Activated CD4-positive, alpha-beta T cell treated with anti-CD3 and anti-CD28 coated beads, Interleukin-2, amount 10 ng/mL, durations not matched to agents 7 days and 5 days (primary cell): ENCODE measurements at regions of chr3 and their contacts with region 1.

Region 1: GRCh38 chr3:197613199-197613598 is 57.4 kb upstream of the BDH1 start:
- DNase-seq: peak; percentile 46
- H3K4me3 Mint-ChIP-seq: no peak overlapping the region
- H3K27ac Mint-ChIP-seq: peak overlapping the region; percentile 83
- H3K4me1 Mint-ChIP-seq: peaks cover 21% of the 10 kb centered on the region
- H3K27me3 Mint-ChIP-seq: no peaks in the 10 kb centered on the region

Region 2: DNA sequence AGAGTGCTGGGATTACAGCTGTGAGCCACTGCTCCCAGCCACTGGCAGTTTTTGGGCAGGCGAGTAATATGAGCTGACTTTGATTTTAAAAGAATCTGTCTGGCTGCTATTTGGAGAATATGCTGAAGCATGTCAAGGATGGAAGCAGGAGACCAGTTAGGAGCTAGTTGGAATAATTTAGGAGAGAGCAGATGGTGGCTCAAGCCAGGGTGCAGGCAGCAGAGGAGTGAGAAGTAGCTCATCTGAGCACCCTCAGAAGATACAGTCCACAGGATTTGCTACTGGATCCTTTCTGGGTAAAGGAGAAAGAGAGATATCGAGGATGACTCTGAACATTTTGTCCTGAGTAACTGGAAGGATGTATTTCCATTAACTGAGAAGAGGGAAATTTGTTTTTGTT is 27.0 kb before region 1 on chr3:
- CTCF ChIA-PET with region 1: no interaction called
- POLR2A ChIA-PET with region 1: no interaction called
- DNase-seq: no peak
- H3K4me3 Mint-ChIP-seq: no peak overlapping the region
- H3K27ac Mint-ChIP-seq: no peak overlapping the region
- H3K4me1 Mint-ChIP-seq: no peaks in the 10 kb centered on the region
- H3K27me3 Mint-ChIP-seq: peaks cover 4% of the 10 kb centered on the region

Region 3: GRCh38 chr3:197599089-197599765 is 14.0 kb before region 1 on chr3:
- CTCF ChIA-PET with region 1: interaction called, 33 read pairs
- POLR2A ChIA-PET with region 1: interaction called, 3 read pairs
- DNase-seq: peak; percentile 87
- H3K4me3 Mint-ChIP-seq: no peak overlapping the region
- H3K27ac Mint-ChIP-seq: peak overlapping the region; percentile 25
- H3K4me1 Mint-ChIP-seq: no peaks in the 10 kb centered on the region
- H3K27me3 Mint-ChIP-seq: peaks cover 4% of the 10 kb centered on the region

Region 4: DNA sequence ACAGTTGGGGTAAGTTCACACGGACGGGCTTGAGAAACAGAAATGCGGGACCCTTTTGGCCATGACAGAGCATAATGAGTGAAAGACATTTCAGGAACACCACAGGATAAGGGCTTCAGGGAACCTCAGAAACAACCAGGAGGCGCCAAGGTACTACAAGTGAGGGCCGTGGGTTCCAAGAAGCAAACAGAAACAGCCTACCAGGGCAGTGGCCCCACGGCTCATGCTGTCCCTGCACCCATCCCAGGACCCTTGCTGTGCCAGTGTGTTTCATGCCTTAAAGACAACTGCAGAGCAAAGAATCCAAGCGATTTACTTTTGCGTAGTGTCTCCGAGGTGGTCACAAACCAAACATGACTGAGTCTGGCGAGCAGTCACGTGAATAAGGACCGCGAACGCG is 69.5 kb after region 1 on chr3:
- CTCF ChIA-PET with region 1: no interaction called
- POLR2A ChIA-PET with region 1: no interaction called
- DNase-seq: no peak
- H3K4me3 Mint-ChIP-seq: no peak overlapping the region
- H3K27ac Mint-ChIP-seq: no peak overlapping the region
- H3K4me1 Mint-ChIP-seq: no peaks in the 10 kb centered on the region
- H3K27me3 Mint-ChIP-seq: no peaks in the 10 kb centered on the region